WTC11 (cell line): ENCODE measurements at regions of chr12 and their contacts with region 1.

Region 1: GRCh38 chr12:15532364-15532977 is 210.2 kb downstream of the PTPRO start:
- DNase-seq: peak; percentile 51
- ATAC-seq: peak; percentile 93
- H3K4me3 Mint-ChIP-seq: no peak overlapping the region
- H3K27ac Mint-ChIP-seq: no peak overlapping the region
- H3K4me1 Mint-ChIP-seq: 0 out of 2 replicates have a peak, but pooled peaks cover under 1% of the 10 kb centered on the region
- H3K27me3 Mint-ChIP-seq: no peaks in the 10 kb centered on the region
- CTCF ChIP-seq: peak; percentile 37; the same call in 1 of the 2 replicates

Region 2: DNA sequence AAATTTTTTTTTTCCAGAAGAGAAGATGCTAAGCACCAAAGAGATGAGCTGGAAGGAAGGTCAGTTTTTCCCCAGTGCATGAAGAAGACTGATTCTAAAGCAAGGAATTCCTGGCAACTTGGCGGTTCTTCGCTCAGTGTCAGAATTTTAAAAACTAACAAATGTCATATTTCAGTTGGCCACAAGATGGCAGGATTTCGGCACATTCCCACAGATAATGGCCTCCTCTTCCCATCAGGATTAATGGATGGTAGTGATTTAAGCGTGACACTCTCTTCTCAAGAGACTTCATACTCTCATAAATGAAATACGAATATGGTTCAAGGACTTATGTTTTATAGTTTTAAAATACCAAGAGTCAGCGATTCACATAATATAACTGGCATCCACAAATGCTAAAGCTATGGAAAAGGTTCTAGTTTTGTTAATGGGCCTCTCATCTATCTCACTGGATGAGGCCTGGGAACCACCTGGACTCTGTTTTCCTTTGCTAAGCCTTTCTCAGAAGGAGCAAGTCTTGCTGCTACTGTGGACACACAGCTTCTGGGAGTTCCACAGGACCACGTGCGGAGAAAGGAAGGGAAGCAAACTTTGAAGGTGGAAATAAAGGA is 256.3 kb before region 1 on chr12:
- CTCF ChIA-PET with region 1: interaction called, 18 read pairs
- POLR2A ChIA-PET with region 1: no interaction called
- DNase-seq: no peak
- ATAC-seq: peak; percentile 80
- H3K4me3 Mint-ChIP-seq: no peak overlapping the region
- H3K27ac Mint-ChIP-seq: no peak overlapping the region
- H3K4me1 Mint-ChIP-seq: peaks cover 7% of the 10 kb centered on the region
- H3K27me3 Mint-ChIP-seq: no peaks in the 10 kb centered on the region
- CTCF ChIP-seq: peak; percentile 65; the same call in 1 of the 2 replicates

Region 3: DNA sequence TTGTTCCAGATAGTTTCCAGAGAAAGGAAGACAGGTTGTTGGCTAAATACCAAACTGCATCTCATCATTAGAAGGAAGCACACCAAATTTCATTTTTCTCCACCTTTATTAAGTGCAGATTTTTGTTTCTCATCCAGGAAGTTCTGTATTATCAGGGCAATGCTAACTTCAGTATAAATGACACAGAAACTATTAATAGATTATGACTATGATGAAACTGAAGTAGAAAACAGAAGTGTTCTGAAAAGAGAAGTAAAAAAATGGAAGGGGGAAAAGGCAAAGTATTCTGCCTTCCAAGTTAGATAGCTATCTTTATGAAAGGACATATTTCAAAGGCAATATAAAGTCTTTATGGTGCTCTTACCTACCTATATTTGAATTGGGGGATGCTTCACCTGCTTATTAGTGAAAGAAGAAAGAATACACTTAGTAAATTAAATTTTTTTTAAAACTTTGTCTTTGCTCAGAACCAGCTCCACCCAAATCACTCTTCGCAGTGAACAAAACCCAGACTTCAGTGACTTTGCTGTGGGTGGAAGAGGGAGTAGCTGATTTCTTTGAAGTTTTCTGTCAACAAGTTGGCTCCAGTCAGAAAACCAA is 13.7 kb after region 1 on chr12:
- CTCF ChIA-PET with region 1: interaction called, 12 read pairs
- POLR2A ChIA-PET with region 1: no interaction called
- DNase-seq: no peak
- ATAC-seq: no peak
- H3K4me3 Mint-ChIP-seq: no peak overlapping the region
- H3K27ac Mint-ChIP-seq: no peak overlapping the region
- H3K4me1 Mint-ChIP-seq: no peaks in the 10 kb centered on the region
- H3K27me3 Mint-ChIP-seq: no peaks in the 10 kb centered on the region
- CTCF ChIP-seq: no peak

Region 4: GRCh38 chr12:15590180-15590826 is 57.8 kb after region 1 on chr12:
- CTCF ChIA-PET with region 1: interaction called, 85 read pairs
- POLR2A ChIA-PET with region 1: interaction called, 3 read pairs
- DNase-seq: peak; percentile 16
- ATAC-seq: peak; percentile 93
- H3K4me3 Mint-ChIP-seq: peak overlapping the region; percentile 65
- H3K27ac Mint-ChIP-seq: no peak overlapping the region
- H3K4me1 Mint-ChIP-seq: peaks cover 17% of the 10 kb centered on the region
- H3K27me3 Mint-ChIP-seq: peaks cover 5% of the 10 kb centered on the region
- CTCF ChIP-seq: peak; percentile 56

Region 5: GRCh38 chr12:15636060-15636890 is 103.8 kb after region 1 on chr12:
- CTCF ChIA-PET with region 1: no interaction called
- POLR2A ChIA-PET with region 1: no interaction called
- DNase-seq: no peak
- ATAC-seq: no peak
- H3K4me3 Mint-ChIP-seq: no peak overlapping the region
- H3K27ac Mint-ChIP-seq: no peak overlapping the region
- H3K4me1 Mint-ChIP-seq: peaks cover 12% of the 10 kb centered on the region
- H3K27me3 Mint-ChIP-seq: no peaks in the 10 kb centered on the region
- CTCF ChIP-seq: no peak

Region 6: GRCh38 chr12:15856097-15856982 is 323.9 kb after region 1 on chr12:
- CTCF ChIA-PET with region 1: interaction called, 64 read pairs
- POLR2A ChIA-PET with region 1: no interaction called
- DNase-seq: no peak
- ATAC-seq: peak; percentile 26; the same call in 1 of the 2 replicates
- H3K4me3 Mint-ChIP-seq: no peak overlapping the region
- H3K27ac Mint-ChIP-seq: no peak overlapping the region
- H3K4me1 Mint-ChIP-seq: peaks cover 6% of the 10 kb centered on the region; the same call in 1 of the 2 replicates
- H3K27me3 Mint-ChIP-seq: no peaks in the 10 kb centered on the region
- CTCF ChIP-seq: peak; percentile 58